ENCODE measurements at regions of chrX and their contacts with region 1.

Region 1: GRCh38 chrX:14872851-14873675 is at the starts of genes FANCB and MOSPD2:
- DNase-seq: peak; percentile 93
- H3K4me3 Mint-ChIP-seq: peak within 1 kb of the TSS; percentile 84
- H3K27ac Mint-ChIP-seq: peak within 1 kb of the TSS; percentile 81
- H3K4me1 Mint-ChIP-seq: peaks cover 17% of the 10 kb centered on the region
- H3K27me3 Mint-ChIP-seq: no peaks in the 10 kb centered on the region
- total RNA-seq, gene FANCB: 17.0 and 18.8 TPM in 2 replicates
- total RNA-seq, gene MOSPD2: 14.3 and 15.1 TPM in 2 replicates

Region 2: DNA sequence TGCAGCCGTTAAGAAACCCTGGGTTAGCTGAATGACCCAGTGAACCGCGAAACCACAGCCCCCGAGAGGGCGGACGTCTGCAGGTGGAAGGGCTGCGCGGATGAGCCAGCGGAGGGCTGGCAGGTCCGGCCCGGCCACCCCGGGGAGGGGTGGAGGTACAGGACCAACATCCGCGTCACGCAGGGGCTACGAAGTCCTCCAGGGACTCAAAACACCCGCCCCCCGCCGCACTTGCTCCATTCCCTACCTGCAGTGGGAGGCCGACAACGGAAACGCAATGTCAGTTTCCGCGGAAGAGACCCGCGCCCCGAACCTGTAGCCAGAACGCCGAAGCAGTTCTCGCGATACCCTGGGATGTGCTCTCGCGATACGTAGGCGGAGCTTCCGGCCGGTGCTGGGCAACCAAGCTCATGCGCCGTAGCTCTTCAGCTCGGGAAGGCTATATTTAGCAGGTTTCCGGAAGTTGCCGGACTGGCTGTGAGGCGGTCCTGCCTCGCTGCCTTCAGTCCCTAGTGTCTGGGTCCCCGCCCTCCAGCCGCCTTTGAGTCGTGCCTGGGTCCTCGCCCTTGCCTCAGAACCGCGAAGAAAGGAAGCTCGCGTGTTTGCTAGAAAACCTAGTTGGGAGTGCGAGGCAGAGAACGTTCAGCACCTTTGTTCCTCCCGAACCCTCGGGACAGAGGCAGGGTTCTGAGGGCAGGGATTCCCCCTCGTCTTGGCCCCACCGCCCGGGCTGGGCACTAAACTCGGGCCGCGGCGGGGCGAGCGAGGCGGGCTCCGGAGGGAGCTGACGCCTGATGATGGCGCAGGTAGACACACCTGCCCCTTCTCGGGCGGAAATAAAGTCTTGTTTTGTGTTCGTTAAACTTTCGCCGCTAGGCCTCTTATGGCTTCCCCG is 1138.5 kb before region 1 on chrX and contains the starts of genes OFD1 and TRAPPC2:
- intact Hi-C with region 1: loop called (anchors 5 kb)
- DNase-seq: peak; percentile 88
- H3K4me3 Mint-ChIP-seq: peak within 1 kb of the TSS; percentile 97
- H3K27ac Mint-ChIP-seq: peak within 1 kb of the TSS; percentile 98
- H3K4me1 Mint-ChIP-seq: peaks cover 49% of the 10 kb centered on the region
- H3K27me3 Mint-ChIP-seq: peaks cover 2% of the 10 kb centered on the region
- total RNA-seq, gene OFD1: 21.9 and 22.0 TPM in 2 replicates
- total RNA-seq, gene TRAPPC2: 16.4 and 16.5 TPM in 2 replicates

Region 3: DNA sequence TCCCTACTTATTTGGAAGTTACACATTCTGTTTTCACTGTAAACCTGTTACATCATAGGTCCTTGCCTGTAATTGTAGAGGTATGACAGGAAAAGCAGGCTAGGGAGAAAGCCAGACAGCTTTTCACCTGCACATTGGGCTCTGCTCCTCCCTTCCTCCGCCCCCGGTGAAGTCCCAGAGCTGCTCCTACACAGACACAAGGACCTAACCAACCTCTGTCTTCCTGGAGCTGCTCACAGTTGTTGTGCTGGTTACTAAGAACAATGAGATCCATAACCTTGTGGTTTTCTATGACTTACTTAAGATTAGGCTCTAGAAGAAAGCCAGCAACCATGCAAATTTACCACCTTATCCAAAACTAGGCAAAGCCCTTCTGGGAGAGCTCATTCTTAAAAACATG is 40.2 kb after region 1 on chrX:
- intact Hi-C with region 1: loop called (anchors 5 kb)
- DNase-seq: no peak
- H3K4me3 Mint-ChIP-seq: no peak overlapping the region
- H3K27ac Mint-ChIP-seq: no peak overlapping the region
- H3K4me1 Mint-ChIP-seq: peaks cover 5% of the 10 kb centered on the region
- H3K27me3 Mint-ChIP-seq: no peaks in the 10 kb centered on the region

Region 4: DNA sequence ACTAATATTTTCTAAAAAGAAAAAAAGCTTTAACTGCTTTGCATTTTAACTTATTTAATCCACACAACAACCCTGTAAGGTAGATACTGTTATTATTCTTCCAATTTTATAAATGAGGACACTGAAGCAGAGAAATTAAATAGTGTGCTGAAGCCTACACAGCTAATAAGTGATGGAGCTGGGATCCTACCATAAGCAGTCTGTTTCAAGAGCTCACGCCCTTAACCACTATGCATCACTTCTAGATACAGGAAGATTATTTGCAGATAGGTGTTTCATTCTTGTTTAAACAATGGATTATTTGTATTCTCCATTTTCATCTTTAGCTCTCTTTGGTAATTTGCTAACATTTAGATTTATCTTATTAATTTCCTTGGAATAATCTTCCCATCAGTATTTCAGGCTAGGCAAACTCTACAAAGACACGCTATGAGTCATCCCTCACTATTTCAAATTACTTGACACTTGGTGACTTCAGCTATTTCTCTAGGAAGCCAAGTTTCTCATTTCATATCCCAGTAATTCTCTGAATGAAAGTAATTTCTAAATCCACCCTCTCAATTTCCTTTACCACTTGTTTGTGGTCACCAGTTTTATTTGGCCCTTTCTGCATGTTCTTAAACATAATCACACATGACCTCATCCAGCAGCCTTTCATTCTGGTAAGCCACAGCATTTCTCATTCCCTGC is 329.5 kb after region 1 on chrX:
- intact Hi-C with region 1: loop called (anchors 1 kb)
- DNase-seq: no peak
- H3K4me3 Mint-ChIP-seq: no peak overlapping the region
- H3K27ac Mint-ChIP-seq: peak overlapping the region; percentile 76
- H3K4me1 Mint-ChIP-seq: peaks cover 35% of the 10 kb centered on the region
- H3K27me3 Mint-ChIP-seq: peaks cover 9% of the 10 kb centered on the region

Region 5: GRCh38 chrX:15215366-15215765 is 342.3 kb after region 1 on chrX:
- intact Hi-C with region 1: no loop called
- DNase-seq: no peak
- H3K4me3 Mint-ChIP-seq: no peak overlapping the region
- H3K27ac Mint-ChIP-seq: no peak overlapping the region
- H3K4me1 Mint-ChIP-seq: no peaks in the 10 kb centered on the region
- H3K27me3 Mint-ChIP-seq: peaks cover 10% of the 10 kb centered on the region

Region 6: DNA sequence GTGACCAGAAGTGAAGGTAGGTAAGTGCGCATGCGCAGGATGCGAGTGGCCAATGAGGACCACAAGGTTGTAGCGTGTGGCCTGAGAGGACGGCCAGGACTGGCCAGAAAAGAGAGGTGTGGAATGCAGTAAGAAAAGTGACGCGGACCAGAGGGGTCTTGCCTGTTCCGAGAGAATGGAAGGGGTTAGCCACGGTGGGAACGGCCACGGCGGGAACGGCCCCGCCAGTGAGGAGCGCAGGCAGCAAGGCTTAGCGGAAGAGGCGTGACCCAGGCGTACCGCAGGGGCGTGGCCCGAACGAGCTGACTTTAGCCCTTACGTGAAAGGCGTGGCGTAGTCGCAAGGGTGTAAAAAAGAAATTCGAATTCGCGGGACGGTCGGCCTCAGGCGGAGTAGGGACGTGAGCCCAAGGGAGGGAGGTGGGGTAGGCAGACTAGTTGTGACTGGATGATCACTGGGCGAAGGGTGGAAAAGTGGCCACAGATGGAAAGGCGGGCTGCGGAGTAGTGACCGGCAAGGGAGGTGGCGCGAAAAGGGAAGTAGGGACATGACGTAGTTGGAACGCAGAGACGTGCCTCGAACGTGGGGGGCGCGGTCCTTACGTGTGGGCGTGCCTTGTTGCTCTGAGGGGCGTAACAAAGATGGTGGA is 801.9 kb after region 1 on chrX:
- intact Hi-C with region 1: loop called (anchors 2 kb)
- DNase-seq: peak; percentile 79
- H3K4me3 Mint-ChIP-seq: no peak overlapping the region
- H3K27ac Mint-ChIP-seq: no peak overlapping the region
- H3K4me1 Mint-ChIP-seq: peaks cover 8% of the 10 kb centered on the region
- H3K27me3 Mint-ChIP-seq: peaks cover 2% of the 10 kb centered on the region

Region 7: GRCh38 chrX:16719334-16720084 is 1846.4 kb after region 1 on chrX and contains the start of gene SYAP1:
- intact Hi-C with region 1: loop called (anchors 10 kb)
- DNase-seq: peak; percentile 89
- H3K4me3 Mint-ChIP-seq: peak within 1 kb of the TSS; percentile 92
- H3K27ac Mint-ChIP-seq: peak within 1 kb of the TSS; percentile 94
- H3K4me1 Mint-ChIP-seq: peaks cover 16% of the 10 kb centered on the region
- H3K27me3 Mint-ChIP-seq: no peaks in the 10 kb centered on the region
- total RNA-seq, gene SYAP1: 19.5 and 19.7 TPM in 2 replicates

Measured in activated T-helper 1 cell treated with anti-CD3 and anti-CD28 coated beads, Interleukin-12 subunit alpha, Interleukin-12 subunit beta, Interleukin-2, Interleukin-4 antibody, amounts not matched to agents 30 ng/mL and 10 ng/mL and 1 ng/mL, durations not matched to agents 14 hours and 24 hours and 36 hours (primary cell).